ENCODE measurements at regions of chrX and their contacts with region 1.

Region 1: DNA sequence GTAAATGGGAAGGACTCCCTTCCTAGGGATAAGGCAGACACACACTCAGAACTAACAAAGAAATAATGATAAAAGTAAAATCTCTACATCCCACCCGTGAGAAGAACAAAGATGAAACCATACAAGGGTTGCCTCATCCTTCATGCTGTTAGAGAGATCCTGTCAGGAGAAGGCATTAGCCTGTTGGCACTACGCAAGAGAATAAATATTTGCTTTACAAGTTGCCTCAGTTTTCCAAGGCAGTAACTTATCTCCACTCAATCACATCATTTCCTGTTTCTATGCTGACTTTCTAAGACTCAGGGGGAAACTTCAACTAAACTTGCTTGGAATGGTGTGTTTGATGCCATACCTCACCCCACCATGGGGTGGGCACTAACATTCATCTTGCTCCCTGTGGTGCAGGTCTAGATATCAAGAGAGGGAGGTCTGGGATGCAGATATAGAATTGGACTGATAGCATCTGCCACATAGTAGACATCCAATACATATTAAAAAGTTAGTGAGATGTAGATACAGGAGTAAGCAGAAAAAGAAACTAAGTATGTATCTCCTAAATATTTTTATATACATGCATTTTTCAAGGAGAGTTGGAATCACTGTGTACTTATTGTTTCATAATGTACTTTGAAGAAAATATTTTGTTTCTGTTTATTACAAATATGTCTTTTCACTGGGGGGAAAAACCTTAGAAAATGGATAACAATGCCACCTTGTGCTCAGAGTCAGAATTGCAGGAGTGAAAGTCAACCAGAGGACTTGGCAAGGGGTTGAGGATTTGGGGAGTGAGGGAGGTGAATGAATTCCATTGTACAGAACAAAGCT is 57.2 kb upstream of the BEX4 start:
- DNase-seq: peak in 1 of 2 experiments; percentile 34
- H3K4me3 ChIP-seq: no peak overlapping the region
- H3K4me3 Mint-ChIP-seq: no peak overlapping the region
- H3K27ac Mint-ChIP-seq: no peak overlapping the region
- H3K4me1 ChIP-seq: no peaks in the 10 kb centered on the region
- H3K4me1 Mint-ChIP-seq: no peaks in the 10 kb centered on the region
- H3K27me3 ChIP-seq: no peaks in the 10 kb centered on the region
- H3K27me3 Mint-ChIP-seq: no peaks in the 10 kb centered on the region
- CTCF ChIP-seq: peak; percentile 52 to 63

Region 2: DNA sequence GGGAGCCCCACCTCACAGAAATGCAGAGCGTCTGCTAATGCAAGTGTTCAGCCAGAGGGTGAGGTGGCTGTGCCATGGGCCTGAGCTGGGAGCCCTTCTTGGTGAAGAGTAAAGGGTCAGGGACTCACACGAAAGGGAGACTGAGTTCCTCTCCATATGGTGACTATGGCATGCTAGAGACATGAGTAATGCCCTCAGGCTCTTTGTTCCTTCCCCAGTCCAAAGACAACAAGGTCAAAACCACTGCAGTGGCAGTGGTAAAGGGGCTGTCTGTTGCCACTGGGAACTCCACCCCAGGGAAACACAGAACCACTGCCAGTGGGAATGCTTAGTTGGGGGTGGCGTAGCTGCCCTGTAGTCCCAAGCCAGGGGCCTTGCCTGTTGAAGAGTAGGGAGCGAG is 198.2 kb before region 1 on chrX:
- CTCF ChIA-PET with region 1: no interaction called
- POLR2A ChIA-PET with region 1: no interaction called
- intact Hi-C with region 1: loop called (anchors 1 kb)
- DNase-seq: no peak
- H3K4me3 ChIP-seq: no peak overlapping the region
- H3K4me3 Mint-ChIP-seq: no peak overlapping the region
- H3K27ac Mint-ChIP-seq: no peak overlapping the region
- H3K4me1 ChIP-seq: no peaks in the 10 kb centered on the region
- H3K4me1 Mint-ChIP-seq: no peaks in the 10 kb centered on the region
- H3K27me3 ChIP-seq: no peaks in the 10 kb centered on the region
- H3K27me3 Mint-ChIP-seq: no peaks in the 10 kb centered on the region
- CTCF ChIP-seq: no peak

Region 3: DNA sequence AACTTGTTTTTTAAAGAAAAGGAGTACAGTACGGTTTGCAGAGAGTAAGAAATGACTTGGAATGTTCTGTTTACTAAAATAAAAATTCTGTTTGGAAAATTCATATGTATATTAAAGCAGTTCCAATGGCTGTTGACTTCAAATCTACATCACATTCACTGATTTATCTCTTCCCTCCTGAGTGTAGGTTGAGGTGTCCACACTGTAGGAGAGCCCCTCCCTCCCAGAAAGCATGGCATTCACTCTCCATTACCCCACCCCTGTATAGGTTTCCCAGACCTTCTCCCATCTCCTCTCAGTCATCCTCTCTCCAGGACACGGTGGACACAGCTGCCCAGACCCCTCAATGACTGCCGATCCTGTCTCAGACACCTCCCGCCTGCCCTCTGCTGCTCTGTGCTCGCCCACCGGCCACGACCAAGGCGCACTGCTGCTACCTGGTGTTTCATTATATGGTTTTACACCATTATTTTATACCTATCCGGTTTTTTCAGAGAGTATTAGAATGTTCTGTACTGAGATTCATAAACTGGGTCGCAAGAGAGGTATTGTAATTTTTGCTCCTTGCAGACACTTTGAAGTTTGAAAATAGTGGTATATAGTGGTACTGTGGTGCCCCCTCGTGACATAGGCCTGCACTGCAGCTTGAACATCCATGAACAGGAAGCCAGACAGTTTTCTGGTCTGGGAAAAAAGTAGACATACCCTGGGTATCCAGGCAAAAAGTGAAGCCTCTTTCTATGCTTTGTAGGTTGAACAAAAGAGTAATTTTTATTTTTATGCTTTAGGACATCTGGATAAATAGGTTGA is 18.4 kb after region 1 on chrX:
- CTCF ChIA-PET with region 1: no interaction called
- POLR2A ChIA-PET with region 1: no interaction called
- intact Hi-C with region 1: loop called (anchors 2 kb)
- DNase-seq: peak; percentile 39 to 54
- H3K4me3 ChIP-seq: no peak overlapping the region
- H3K4me3 Mint-ChIP-seq: no peak overlapping the region
- H3K27ac Mint-ChIP-seq: no peak overlapping the region
- H3K4me1 ChIP-seq: no peaks in the 10 kb centered on the region
- H3K4me1 Mint-ChIP-seq: peaks cover 5% of the 10 kb centered on the region
- H3K27me3 ChIP-seq: no peaks in the 10 kb centered on the region
- H3K27me3 Mint-ChIP-seq: peaks cover 6% of the 10 kb centered on the region
- CTCF ChIP-seq: peak; percentile 64 to 72

Measured in Caco-2 (cell line).